H1 (cell line): ENCODE measurements at regions of chr6 and their contacts with region 1.

Region 1: DNA sequence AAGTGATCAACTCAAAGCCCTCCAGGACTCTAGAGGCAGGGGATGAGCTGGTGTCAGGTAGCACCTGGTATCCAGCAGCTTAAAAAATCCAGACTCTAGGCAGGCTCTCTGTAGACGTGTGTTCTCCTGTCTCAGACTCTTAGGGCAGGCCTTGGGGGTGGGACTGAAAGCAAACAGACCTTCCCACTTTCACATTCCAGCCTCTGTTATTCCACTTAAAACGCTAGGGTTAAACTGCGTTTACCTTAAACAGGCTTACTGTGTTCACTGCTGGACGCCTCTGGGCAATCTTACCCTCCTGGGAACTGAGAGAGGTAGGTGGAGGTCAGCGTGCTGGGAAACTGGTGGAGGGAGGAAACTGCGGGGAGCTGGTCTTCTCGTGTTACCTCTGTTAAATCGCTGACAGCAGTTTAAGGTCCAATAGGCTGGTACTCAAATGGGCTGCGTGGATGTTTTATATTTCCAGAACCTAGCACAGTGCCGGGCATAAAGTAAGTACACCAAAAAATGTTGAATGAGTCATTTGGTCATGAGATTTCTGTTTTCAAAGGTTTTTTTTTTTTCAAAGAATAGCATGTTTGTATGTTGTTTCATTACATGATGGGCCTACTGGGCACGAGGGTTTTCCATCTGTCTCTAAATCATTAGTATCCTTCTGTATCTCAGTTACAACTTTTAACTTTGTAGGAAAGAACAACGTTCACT is at the start of gene GCNT2:
- DNase-seq: peak; percentile 59 to 78
- H3K4me3 ChIP-seq: peak within 1 kb of the TSS in 3 of 4 experiments; percentile 26 to 41 (median 35); a peak in 5 of 8 replicates
- H3K27ac ChIP-seq: peak within 1 kb of the TSS; percentile 1
- H3K4me1 ChIP-seq: peaks cover 10 to 30% (median 20%) of the 10 kb centered on the region in 4 experiments
- H3K27me3 ChIP-seq: no peaks in the 10 kb centered on the region
- CTCF ChIP-seq: no peak
- EP300 ChIP-seq: peak in 1 of 2 experiments; percentile 74; a peak in 1 of 3 replicates
- POLR2A ChIP-seq: peak; percentile 33 to 37; a peak in 2 of 3 replicates
- RAD21 ChIP-seq: peak in 1 of 2 experiments; percentile 11; a peak in 1 of 4 replicates
- total RNA-seq, gene GCNT2: 52.5 and 54.3 TPM in 2 replicates

Region 2: DNA sequence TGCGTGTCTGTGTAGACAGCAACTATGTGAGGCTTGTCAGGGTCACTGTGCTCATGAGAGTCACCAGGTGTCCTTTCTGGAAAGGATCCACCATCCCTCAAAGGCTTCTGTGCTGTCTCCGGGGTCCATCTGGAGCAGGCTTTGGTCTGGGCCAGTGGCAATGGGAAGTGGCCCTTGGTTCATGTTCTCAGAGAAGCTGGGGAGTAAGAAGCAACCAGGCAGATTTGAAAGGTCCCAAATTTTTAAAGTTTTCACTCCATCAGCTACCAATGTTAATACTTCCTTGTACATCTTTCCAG is 68.1 kb after region 1 on chr6:
- CTCF ChIA-PET with region 1: interaction called, 3 read pairs
- POLR2A ChIA-PET with region 1: interaction called, 15 read pairs
- DNase-seq: no peak
- H3K4me3 ChIP-seq: no peak overlapping the region
- H3K27ac ChIP-seq: 0 out of 2 replicates have a peak overlapping the region, but pooled peaks have one; percentile 36
- H3K4me1 ChIP-seq: peaks cover 17 to 55% (median 44%) of the 10 kb centered on the region in 4 experiments
- H3K27me3 ChIP-seq: no peaks in the 10 kb centered on the region
- CTCF ChIP-seq: no peak
- EP300 ChIP-seq: no peak
- POLR2A ChIP-seq: no peak
- RAD21 ChIP-seq: no peak

Region 3: DNA sequence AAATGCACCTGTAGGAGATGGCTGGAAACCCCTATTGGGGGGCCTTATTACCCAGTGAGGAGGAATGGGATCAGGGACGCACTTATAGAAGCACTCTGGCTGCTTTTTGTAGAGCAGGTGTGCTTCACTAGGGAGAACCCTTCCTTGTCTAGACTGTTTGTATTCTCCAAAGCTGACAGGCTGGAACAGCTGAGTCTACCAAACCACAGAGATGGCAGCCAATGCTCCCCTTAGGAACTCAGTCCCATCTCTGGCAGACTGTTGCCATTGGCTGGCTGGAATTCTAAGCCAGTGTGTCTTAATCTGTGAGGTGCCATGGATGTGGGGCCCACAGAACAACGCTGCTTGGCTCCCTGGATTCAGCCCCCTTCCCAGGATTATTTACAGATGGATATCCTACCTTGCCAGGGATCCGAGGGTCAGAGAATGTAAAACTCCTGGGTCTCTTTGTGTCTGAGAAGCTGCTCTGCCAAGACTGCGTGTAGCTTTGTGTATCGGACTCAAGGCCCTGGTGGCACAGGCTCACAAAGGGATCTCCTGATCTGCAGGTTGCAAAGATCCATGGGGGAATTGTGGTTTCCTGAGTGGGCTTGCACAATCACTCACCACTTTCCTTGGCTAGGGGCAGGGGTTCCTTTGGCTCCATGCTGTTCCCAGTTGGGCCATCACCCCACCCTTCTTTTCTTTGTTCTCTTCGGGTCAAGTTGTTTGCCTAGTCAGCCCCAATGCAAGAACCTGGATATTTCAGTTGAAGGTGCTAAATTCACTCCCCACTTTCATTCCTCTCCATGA is 147.1 kb after region 1 on chr6:
- CTCF ChIA-PET with region 1: no interaction called
- POLR2A ChIA-PET with region 1: no interaction called
- DNase-seq: no peak
- H3K4me3 ChIP-seq: no peak overlapping the region
- H3K27ac ChIP-seq: no peak overlapping the region
- H3K4me1 ChIP-seq: no peaks in the 10 kb centered on the region
- H3K27me3 ChIP-seq: no peaks in the 10 kb centered on the region
- CTCF ChIP-seq: no peak
- EP300 ChIP-seq: no peak
- POLR2A ChIP-seq: no peak
- RAD21 ChIP-seq: no peak